Brain microvascular endothelial cell (primary cell): ENCODE measurements at regions of chr14 and their contacts with region 1.

Region 1: DNA sequence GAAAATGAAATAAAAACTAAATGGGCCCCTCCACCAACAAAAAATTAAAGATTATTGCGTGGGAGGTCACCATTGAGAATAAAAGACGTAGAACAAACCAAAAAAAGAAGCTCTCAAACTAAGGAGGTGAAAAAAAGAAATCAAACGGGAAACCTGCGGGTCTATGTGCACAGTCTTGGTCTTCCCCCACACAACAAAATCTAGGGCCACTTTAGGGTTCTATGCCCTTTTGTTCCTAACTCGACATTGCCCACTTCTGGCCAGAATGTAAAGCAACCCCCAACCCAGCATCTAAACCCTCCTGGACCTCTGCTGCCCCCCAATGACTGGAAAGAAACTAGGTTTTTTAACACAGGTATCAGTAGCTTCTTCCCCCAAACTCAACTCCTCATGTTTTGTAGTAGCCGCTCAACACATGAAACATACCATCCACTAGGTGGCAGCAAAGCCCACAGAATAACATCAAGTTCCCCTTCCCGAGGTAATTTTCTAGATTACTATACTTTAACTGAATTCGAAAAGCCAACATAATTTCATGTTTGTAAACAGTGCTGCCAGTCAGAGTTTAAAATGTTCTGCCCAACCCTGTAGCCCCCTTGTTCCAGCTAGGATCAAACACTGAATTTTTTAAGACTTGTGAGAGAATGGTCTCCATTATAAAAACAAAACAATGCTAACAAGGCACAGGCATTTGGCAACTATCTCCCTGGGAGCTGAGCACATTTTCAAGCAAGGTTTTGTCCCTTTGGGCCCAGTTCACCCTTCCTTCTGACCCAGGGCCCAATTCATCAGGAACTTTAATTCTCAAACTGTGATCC is 18.7 kb downstream of the DAD1 start:
- DNase-seq: peak; percentile 70
- H3K4me3 ChIP-seq: no peak overlapping the region
- H3K27ac ChIP-seq: peak overlapping the region; percentile 21
- H3K27me3 ChIP-seq: no peaks in the 10 kb centered on the region
- CTCF ChIP-seq: peak; percentile 71

Region 2: DNA sequence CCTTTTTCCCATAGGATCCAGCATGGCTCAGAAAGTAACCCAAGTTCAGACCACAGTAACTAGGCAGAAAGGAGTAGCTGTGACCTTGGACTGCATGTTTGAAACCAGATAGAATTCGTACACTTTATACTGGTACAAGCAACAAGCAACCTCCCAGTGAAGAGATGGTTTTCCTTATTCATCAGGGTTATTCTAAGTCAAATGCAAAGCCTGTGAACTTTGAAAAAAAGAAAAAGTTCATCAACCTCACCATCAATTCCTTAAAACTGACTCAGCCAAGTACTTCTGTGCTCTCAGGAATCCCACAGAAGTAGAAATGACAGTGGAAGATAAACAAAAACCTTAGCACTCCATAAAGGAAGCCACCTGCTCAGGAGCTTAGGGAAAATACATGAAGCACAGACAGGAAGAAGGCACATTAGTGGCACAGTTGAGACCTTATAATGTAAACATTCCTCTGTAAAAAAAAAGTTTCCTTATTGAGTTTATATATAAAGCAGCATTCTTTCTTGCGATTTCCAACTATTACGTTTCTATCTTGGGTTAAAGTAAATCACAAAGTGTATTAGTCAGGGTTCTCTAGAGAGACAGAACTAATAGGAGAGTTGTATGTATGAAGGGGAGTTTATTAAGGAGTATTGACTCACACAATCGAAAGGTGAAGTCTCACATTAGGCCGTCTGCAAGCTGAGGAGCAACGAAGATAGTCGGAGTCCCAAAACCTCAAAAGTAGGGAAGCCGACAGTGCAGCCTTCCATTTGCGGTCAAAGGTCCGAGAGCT is 379.7 kb before region 1 on chr14:
- in situ Hi-C with region 1: no loop called
- DNase-seq: peak; percentile 77
- H3K4me3 ChIP-seq: no peak overlapping the region
- H3K27ac ChIP-seq: peak overlapping the region; percentile 91
- H3K27me3 ChIP-seq: no peaks in the 10 kb centered on the region
- CTCF ChIP-seq: no peak

Region 3: DNA sequence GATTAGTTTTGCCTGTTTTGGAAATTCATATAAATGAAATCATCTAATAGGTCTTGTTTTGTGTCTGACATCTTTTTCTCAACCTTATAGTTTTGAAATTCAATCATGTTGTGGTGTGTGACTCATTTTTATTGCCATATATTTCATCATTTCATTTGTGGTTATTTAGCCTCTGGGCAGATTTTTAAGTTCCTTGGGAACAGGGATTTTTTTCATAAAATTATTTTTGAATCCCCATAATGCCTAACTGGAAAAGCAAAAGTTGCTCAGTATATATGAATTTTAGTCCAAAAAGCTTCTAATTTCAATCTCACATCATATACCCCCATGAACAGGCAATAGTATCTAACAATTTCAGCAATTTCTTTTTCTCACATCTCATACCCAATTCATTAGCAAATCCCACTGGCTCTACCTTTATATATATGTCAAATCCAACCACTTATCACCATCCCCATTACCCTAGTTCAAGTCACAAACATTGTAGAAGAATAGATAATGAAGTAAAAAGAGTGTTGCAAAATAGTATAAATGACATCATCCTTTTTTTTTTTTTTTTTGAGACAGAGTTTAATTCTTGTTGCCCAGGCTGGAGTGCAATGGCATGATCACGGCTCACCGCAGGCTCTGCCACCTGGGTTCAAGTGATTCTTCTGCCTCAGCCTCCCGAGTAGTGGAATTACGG is 76.4 kb after region 1 on chr14:
- in situ Hi-C with region 1: loop called (anchors 10 kb)
- DNase-seq: no peak
- H3K4me3 ChIP-seq: no peak overlapping the region
- H3K27ac ChIP-seq: peak overlapping the region; percentile 77
- H3K27me3 ChIP-seq: no peaks in the 10 kb centered on the region
- CTCF ChIP-seq: no peak